ENCODE measurements at regions of chr5 and their contacts with region 1.

Region 1: DNA sequence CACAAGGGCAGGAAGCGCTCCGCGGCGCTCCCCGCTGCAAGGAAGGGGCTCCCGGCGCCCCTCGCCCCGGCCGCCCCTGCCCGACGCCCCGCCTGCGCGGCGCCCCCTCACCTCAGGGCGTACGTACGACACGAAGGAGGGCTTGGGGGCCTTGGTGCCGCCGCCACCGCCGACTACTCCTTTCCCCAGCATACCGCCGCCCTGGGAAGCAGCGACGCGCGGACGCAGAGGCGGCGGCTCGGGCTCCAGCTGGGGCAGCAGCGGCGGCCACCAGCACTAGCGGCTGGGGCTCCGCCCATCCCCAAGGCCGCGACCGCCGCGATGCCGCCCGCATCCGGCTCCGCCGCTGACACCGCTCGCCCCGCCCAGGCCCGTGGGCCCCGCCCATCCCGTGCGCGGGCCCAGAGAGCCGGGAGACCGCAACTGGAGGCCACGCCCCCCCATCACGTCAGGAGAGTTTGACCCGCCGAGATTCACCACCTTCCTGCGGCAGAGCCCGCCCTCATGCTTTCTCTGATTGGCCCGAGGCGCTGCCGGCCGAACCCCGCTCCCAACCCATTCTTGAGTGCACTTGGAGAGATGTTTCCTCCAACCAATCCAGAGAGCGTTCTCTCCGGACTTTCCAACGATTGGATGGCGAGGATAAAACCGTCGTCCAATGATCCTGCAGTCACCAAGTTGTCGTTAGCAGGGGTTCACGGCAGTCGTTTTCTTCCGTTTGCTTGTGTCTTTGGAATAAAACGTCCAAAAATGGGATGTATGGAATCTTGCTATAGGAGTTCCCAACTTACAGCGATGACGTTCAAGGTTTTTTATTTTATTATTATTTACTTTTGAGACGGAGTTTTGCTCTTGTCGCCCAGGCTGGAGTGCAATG is at the start of gene MTMR12:
- DNase-seq: peak; percentile 99 to 100
- H3K4me3 ChIP-seq: peak within 1 kb of the TSS; percentile 89
- H3K4me3 Mint-ChIP-seq: peak within 1 kb of the TSS; percentile 78
- H3K27ac Mint-ChIP-seq: peak within 1 kb of the TSS; percentile 66
- H3K4me1 ChIP-seq: peaks cover 10% of the 10 kb centered on the region
- H3K4me1 Mint-ChIP-seq: peaks cover 21% of the 10 kb centered on the region
- H3K27me3 ChIP-seq: no peaks in the 10 kb centered on the region
- H3K27me3 Mint-ChIP-seq: no peaks in the 10 kb centered on the region
- CTCF ChIP-seq: no peak
- total RNA-seq, gene MTMR12: 35.1 and 35.7 TPM in 2 replicates

Region 2: GRCh38 chr5:32174011-32174870 is 138.6 kb before region 1 on chr5 and contains the start of gene GOLPH3:
- CTCF ChIA-PET with region 1: no interaction called
- POLR2A ChIA-PET with region 1: interaction called, 5 read pairs
- intact Hi-C with region 1: loop called (anchors 2 kb)
- DNase-seq: peak; percentile 93 to 96
- H3K4me3 ChIP-seq: peak within 1 kb of the TSS; percentile 98
- H3K4me3 Mint-ChIP-seq: peak within 1 kb of the TSS; percentile 90
- H3K27ac Mint-ChIP-seq: peak within 1 kb of the TSS; percentile 98
- H3K4me1 ChIP-seq: 0 out of 2 replicates have a peak, but pooled peaks cover 4% of the 10 kb centered on the region
- H3K4me1 Mint-ChIP-seq: peaks cover 7% of the 10 kb centered on the region
- H3K27me3 ChIP-seq: no peaks in the 10 kb centered on the region
- H3K27me3 Mint-ChIP-seq: no peaks in the 10 kb centered on the region
- CTCF ChIP-seq: no peak
- total RNA-seq, gene GOLPH3: 107 and 122 TPM in 2 replicates

Region 3: GRCh38 chr5:32249646-32250045 is 63.2 kb before region 1 on chr5:
- CTCF ChIA-PET with region 1: no interaction called
- POLR2A ChIA-PET with region 1: interaction called, 3 read pairs
- intact Hi-C with region 1: loop called (anchors 1 kb)
- DNase-seq: peak; percentile 83 to 85
- H3K4me3 ChIP-seq: no peak overlapping the region
- H3K4me3 Mint-ChIP-seq: peak overlapping the region; percentile 65
- H3K27ac Mint-ChIP-seq: peak overlapping the region; percentile 87
- H3K4me1 ChIP-seq: peaks cover 28% of the 10 kb centered on the region
- H3K4me1 Mint-ChIP-seq: peaks cover 37% of the 10 kb centered on the region
- H3K27me3 ChIP-seq: no peaks in the 10 kb centered on the region
- H3K27me3 Mint-ChIP-seq: no peaks in the 10 kb centered on the region
- CTCF ChIP-seq: no peak

Region 4: GRCh38 chr5:32264954-32265572 is 47.8 kb before region 1 on chr5:
- CTCF ChIA-PET with region 1: interaction called, 4 read pairs
- POLR2A ChIA-PET with region 1: no interaction called
- intact Hi-C with region 1: loop called (anchors 1 kb)
- DNase-seq: no peak
- H3K4me3 ChIP-seq: no peak overlapping the region
- H3K4me3 Mint-ChIP-seq: no peak overlapping the region
- H3K27ac Mint-ChIP-seq: no peak overlapping the region
- H3K4me1 ChIP-seq: peaks cover 16% of the 10 kb centered on the region; the same call in 1 of the 2 replicates
- H3K4me1 Mint-ChIP-seq: peaks cover 17% of the 10 kb centered on the region
- H3K27me3 ChIP-seq: no peaks in the 10 kb centered on the region
- H3K27me3 Mint-ChIP-seq: no peaks in the 10 kb centered on the region
- CTCF ChIP-seq: no peak

Region 5: GRCh38 chr5:32274548-32275395 is 38.1 kb before region 1 on chr5:
- CTCF ChIA-PET with region 1: no interaction called
- POLR2A ChIA-PET with region 1: no interaction called
- intact Hi-C with region 1: loop called (anchors 1 kb)
- DNase-seq: no peak
- H3K4me3 ChIP-seq: no peak overlapping the region
- H3K4me3 Mint-ChIP-seq: no peak overlapping the region
- H3K27ac Mint-ChIP-seq: peak overlapping the region; percentile 52
- H3K4me1 ChIP-seq: peaks cover 26% of the 10 kb centered on the region
- H3K4me1 Mint-ChIP-seq: peaks cover 19% of the 10 kb centered on the region
- H3K27me3 ChIP-seq: no peaks in the 10 kb centered on the region
- H3K27me3 Mint-ChIP-seq: no peaks in the 10 kb centered on the region
- CTCF ChIP-seq: no peak

Region 6: GRCh38 chr5:32471784-32472183 is 158.9 kb after region 1 on chr5:
- CTCF ChIA-PET with region 1: no interaction called
- POLR2A ChIA-PET with region 1: no interaction called
- intact Hi-C with region 1: no loop called
- DNase-seq: no peak
- H3K4me3 ChIP-seq: no peak overlapping the region
- H3K4me3 Mint-ChIP-seq: no peak overlapping the region
- H3K27ac Mint-ChIP-seq: no peak overlapping the region
- H3K4me1 ChIP-seq: peaks cover 30% of the 10 kb centered on the region
- H3K4me1 Mint-ChIP-seq: peaks cover 38% of the 10 kb centered on the region
- H3K27me3 ChIP-seq: no peaks in the 10 kb centered on the region
- H3K27me3 Mint-ChIP-seq: no peaks in the 10 kb centered on the region
- CTCF ChIP-seq: peak in 1 of 2 experiments; percentile 22

Region 7: DNA sequence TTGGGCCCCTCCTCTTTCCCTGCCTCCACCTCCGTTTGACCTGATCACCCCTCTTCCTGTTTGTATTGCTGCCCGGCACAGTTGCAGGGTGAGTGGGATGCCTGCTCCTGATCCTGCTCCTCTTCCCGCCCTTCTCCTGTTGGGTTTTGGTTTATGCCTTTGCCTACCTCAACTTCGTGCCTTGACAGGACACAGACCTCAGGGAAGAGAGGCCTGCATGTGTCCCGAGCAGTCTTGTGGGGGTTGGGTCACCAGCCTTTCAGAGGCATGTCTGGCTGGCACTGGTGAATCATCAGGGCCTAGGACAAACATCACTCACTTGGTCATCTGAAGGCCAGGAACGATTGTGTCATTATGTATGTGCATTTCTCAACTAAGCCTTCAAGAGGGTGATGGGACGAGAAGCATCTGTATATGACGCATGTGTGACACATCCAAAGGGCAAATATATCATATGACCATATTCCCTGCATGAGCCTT is 455.1 kb after region 1 on chr5:
- CTCF ChIA-PET with region 1: no interaction called
- POLR2A ChIA-PET with region 1: no interaction called
- intact Hi-C with region 1: no loop called
- DNase-seq: no peak
- H3K4me3 ChIP-seq: no peak overlapping the region
- H3K4me3 Mint-ChIP-seq: no peak overlapping the region
- H3K27ac Mint-ChIP-seq: no peak overlapping the region
- H3K4me1 ChIP-seq: no peaks in the 10 kb centered on the region
- H3K4me1 Mint-ChIP-seq: no peaks in the 10 kb centered on the region
- H3K27me3 ChIP-seq: no peaks in the 10 kb centered on the region
- H3K27me3 Mint-ChIP-seq: peaks cover 17% of the 10 kb centered on the region
- CTCF ChIP-seq: no peak